ENCODE measurements at regions of chr1 and their contacts with region 1.

Region 1: GRCh38 chr1:151059078-151059907 is at the start of gene CDC42SE1:
- DNase-seq: peak; percentile 91
- ATAC-seq: peak; percentile 78
- H3K4me3 Mint-ChIP-seq: peak within 1 kb of the TSS; percentile 94
- H3K27ac Mint-ChIP-seq: peak within 1 kb of the TSS; percentile 96
- H3K4me1 Mint-ChIP-seq: peaks cover 56% of the 10 kb centered on the region
- H3K27me3 Mint-ChIP-seq: no peaks in the 10 kb centered on the region
- total RNA-seq, gene CDC42SE1: 238 to 245 TPM

Region 2: GRCh38 chr1:151047925-151048645 is 11.2 kb before region 1 on chr1:
- CTCF ChIA-PET with region 1: interaction called, 77 read pairs
- POLR2A ChIA-PET with region 1: interaction called, 32 read pairs
- DNase-seq: peak; percentile 78
- ATAC-seq: peak; percentile 80
- H3K4me3 Mint-ChIP-seq: peak overlapping the region; percentile 89
- H3K27ac Mint-ChIP-seq: peak overlapping the region; percentile 90
- H3K4me1 Mint-ChIP-seq: peaks cover 48% of the 10 kb centered on the region
- H3K27me3 Mint-ChIP-seq: no peaks in the 10 kb centered on the region

Region 3: DNA sequence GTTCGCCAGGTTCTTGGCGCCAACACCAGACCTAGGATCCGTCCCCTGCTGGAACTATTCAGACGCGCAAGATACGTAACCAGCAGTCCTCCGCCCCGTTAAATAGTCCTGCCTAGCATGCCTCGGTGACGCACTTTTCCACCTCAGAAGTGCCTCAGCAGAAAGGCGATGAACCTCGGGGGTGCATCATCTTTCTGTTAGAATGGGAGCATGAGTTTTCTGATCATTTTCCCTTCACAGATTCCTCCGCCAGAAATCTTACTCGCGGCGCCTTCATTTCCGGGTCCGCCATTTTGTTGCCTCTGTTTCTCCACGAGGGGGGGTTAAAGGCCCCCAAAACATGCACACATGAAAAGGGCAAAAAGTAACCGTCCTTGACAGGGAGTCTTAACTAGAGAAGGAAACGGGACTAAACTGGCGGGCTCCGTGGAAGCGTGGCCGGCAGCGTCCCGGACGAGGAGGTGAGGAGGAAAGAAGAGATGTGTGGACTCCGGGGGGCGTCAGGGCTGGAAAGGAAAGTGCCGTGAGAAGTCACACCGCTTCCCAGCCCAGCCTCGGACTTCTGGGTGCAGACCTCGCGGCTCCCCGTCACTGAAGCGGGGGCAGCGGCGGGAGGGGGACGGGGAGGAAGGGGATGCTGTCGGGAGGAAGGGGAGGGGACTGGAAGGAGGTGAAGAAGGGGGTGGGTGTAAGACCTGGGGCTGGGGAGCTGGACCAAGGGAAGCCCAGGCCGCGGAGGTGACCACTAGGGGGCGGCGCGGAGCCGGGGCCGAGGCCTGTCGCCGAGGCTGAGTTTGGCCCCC is 11.4 kb after region 1 on chr1 and contains the start of gene GABPB2:
- CTCF ChIA-PET with region 1: interaction called, 20 read pairs
- POLR2A ChIA-PET with region 1: interaction called, 51 read pairs
- DNase-seq: peak; percentile 88
- ATAC-seq: peak; percentile 87
- H3K4me3 Mint-ChIP-seq: peak within 1 kb of the TSS; percentile 98
- H3K27ac Mint-ChIP-seq: peak within 1 kb of the TSS; percentile 100
- H3K4me1 Mint-ChIP-seq: peaks cover 15% of the 10 kb centered on the region
- H3K27me3 Mint-ChIP-seq: no peaks in the 10 kb centered on the region
- total RNA-seq, gene GABPB2: 32.7 to 34.4 TPM

Region 4: GRCh38 chr1:151311589-151312331 is 252.5 kb after region 1 on chr1:
- CTCF ChIA-PET with region 1: no interaction called
- POLR2A ChIA-PET with region 1: no interaction called
- DNase-seq: peak; percentile 61
- ATAC-seq: peak; percentile 80
- H3K4me3 Mint-ChIP-seq: no peak overlapping the region
- H3K27ac Mint-ChIP-seq: peak overlapping the region; percentile 43
- H3K4me1 Mint-ChIP-seq: peaks cover 14% of the 10 kb centered on the region
- H3K27me3 Mint-ChIP-seq: no peaks in the 10 kb centered on the region